ENCODE measurements at regions of chr4 and their contacts with region 1.

Region 1: DNA sequence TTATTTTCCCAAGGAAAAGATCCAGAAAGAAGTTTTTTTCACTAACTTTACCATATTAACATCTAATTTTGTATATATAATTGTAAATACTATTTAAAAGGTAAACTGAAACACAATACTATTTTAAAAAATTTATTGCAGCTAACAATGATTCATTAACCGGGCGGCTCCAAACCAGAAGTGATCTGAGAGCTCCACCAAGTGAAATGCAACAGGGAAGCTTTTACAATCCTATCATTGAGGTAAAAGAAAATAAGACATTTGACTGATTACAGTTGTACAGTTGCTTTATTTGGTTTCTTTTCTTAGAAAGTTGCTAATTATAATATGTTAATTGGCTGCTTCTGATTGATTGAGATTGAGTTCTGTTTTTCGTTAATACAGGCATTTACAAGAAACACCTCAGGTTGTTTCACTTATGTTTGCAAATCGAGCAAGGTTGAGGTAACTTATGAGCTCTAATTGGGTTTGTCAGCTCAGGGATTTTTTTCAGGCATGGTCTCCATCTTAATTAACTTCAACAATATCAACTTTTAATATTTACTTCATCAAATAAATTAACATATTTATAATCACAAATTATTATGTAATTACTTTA is 220.2 kb upstream of the UGT8 start:
- DNase-seq: peak; percentile 33
- H3K4me3 ChIP-seq: no peak overlapping the region
- H3K27ac ChIP-seq: no peak overlapping the region
- H3K4me1 ChIP-seq: no peaks in the 10 kb centered on the region
- H3K27me3 ChIP-seq: no peaks in the 10 kb centered on the region
- CTCF ChIP-seq: peak; percentile 66

Region 2: DNA sequence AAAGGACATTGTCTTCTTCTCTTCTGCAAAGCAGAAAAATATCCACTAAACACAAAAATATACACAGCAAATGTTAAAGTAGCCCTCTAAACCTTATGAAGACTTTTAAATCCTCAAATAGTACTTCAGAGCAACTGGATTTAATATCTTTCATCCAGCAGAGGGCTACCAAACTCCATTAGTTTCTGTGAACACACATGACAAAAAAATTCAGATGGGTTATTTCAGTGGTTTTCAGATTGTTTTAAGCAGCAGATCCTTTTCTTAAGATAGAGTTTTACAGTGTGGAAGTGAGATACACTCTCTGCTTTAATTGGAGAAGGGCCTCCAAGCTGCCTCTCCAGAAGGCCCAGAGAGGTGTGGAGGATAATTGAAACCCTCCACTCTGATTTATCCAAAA is 1272.3 kb before region 1 on chr4:
- CTCF ChIA-PET with region 1: no interaction called
- POLR2A ChIA-PET with region 1: no interaction called
- intact Hi-C with region 1: loop called (anchors 10 kb)
- DNase-seq: peak; percentile 60
- H3K4me3 ChIP-seq: no peak overlapping the region
- H3K27ac ChIP-seq: no peak overlapping the region
- H3K4me1 ChIP-seq: no peaks in the 10 kb centered on the region
- H3K27me3 ChIP-seq: no peaks in the 10 kb centered on the region
- CTCF ChIP-seq: peak; percentile 51

Region 3: GRCh38 chr4:114217150-114217817 is 161.1 kb before region 1 on chr4:
- CTCF ChIA-PET with region 1: no interaction called
- POLR2A ChIA-PET with region 1: no interaction called
- intact Hi-C with region 1: loop called (anchors 10 kb)
- DNase-seq: no peak
- H3K4me3 ChIP-seq: no peak overlapping the region
- H3K27ac ChIP-seq: no peak overlapping the region
- H3K4me1 ChIP-seq: no peaks in the 10 kb centered on the region
- H3K27me3 ChIP-seq: no peaks in the 10 kb centered on the region
- CTCF ChIP-seq: no peak

Region 4: GRCh38 chr4:114302472-114302871 is 75.9 kb before region 1 on chr4:
- CTCF ChIA-PET with region 1: no interaction called
- POLR2A ChIA-PET with region 1: no interaction called
- intact Hi-C with region 1: no loop called
- DNase-seq: no peak
- H3K4me3 ChIP-seq: no peak overlapping the region
- H3K27ac ChIP-seq: no peak overlapping the region
- H3K4me1 ChIP-seq: no peaks in the 10 kb centered on the region
- H3K27me3 ChIP-seq: no peaks in the 10 kb centered on the region
- CTCF ChIP-seq: no peak

Measured in A673 (cell line).